ENCODE measurements at regions of chr9 and their contacts with region 1.

Region 1: GRCh38 chr9:69672596-69673310 is 582 bp upstream of the APBA1 start:
- DNase-seq: peak; percentile 10
- ATAC-seq: peak; percentile 96
- H3K4me3 ChIP-seq: peak overlapping the region; percentile 43 to 44
- H3K27ac ChIP-seq: no peak overlapping the region
- H3K4me1 ChIP-seq: no peaks in the 10 kb centered on the region
- H3K27me3 ChIP-seq: peaks cover 5% of the 10 kb centered on the region; the same call in 1 of the 2 replicates
- CTCF ChIP-seq: peak; percentile 84

Region 2: GRCh38 chr9:68832853-68833518 is 839.8 kb before region 1 on chr9:
- CTCF ChIA-PET with region 1: no interaction called
- POLR2A ChIA-PET with region 1: no interaction called
- in situ Hi-C with region 1: no loop called
- intact Hi-C with region 1: no loop called
- DNase-seq: no peak
- ATAC-seq: no peak
- H3K4me3 ChIP-seq: no peak overlapping the region
- H3K27ac ChIP-seq: no peak overlapping the region
- H3K4me1 ChIP-seq: no peaks in the 10 kb centered on the region
- H3K27me3 ChIP-seq: no peaks in the 10 kb centered on the region
- CTCF ChIP-seq: no peak

Region 3: DNA sequence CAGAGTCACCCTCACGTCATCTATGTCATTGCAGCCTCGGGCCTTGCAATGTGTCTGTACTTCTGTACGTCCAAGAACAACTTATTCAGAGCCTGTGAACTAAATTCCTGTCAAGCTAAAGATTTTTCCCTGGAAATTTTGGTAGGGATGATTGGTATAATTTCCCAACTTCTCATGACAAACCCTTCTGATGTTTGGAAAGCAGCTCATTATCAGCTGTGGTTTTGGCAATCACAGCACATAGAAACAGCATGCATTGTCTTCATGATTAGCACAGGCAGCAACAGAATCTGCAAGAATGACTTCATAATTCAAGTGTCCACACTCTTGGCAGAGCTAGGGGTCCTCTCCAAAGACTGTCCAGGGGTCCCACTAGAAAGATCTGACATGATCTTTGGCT is 50.1 kb before region 1 on chr9:
- CTCF ChIA-PET with region 1: no interaction called
- POLR2A ChIA-PET with region 1: no interaction called
- in situ Hi-C with region 1: no loop called
- intact Hi-C with region 1: no loop called
- DNase-seq: no peak
- ATAC-seq: no peak
- H3K4me3 ChIP-seq: no peak overlapping the region
- H3K27ac ChIP-seq: no peak overlapping the region
- H3K4me1 ChIP-seq: no peaks in the 10 kb centered on the region
- H3K27me3 ChIP-seq: no peaks in the 10 kb centered on the region; the same call in 1 of the 2 replicates
- CTCF ChIP-seq: no peak

Region 4: DNA sequence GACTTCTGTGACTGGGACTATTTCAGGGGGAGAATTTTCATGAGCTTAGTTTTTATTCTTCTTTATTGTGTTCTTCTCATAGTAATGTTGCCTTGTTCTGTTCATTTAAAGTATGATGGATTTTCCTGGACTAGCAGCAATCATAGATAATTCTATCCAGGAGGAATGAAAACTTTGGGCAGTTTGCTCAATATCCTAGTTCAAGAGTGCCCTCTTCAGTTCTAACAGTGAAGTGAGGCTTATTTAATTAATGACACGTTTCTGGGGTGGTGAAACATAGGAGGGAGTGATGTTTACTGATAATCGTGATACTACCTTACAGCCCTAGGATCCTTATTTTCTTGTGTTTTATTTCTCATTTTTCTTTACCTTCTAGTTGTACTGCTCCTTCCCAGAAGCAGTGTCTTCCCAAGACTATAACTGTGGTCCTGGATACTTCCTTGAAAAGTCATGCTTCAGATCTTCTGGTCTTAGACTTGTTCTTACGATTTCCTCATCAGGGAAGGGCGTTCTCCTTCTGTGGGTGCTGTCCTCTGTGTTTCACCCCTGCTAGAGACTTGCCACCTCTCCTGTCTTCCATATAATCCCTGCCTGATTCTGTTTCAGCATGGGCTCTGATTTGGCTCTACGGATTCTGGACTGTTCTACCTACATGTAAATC is 205.2 kb after region 1 on chr9:
- CTCF ChIA-PET with region 1: no interaction called
- POLR2A ChIA-PET with region 1: no interaction called
- in situ Hi-C with region 1: no loop called
- intact Hi-C with region 1: loop called (anchors 2 kb)
- DNase-seq: no peak
- ATAC-seq: no peak
- H3K4me3 ChIP-seq: no peak overlapping the region
- H3K27ac ChIP-seq: no peak overlapping the region
- H3K4me1 ChIP-seq: no peaks in the 10 kb centered on the region
- H3K27me3 ChIP-seq: no peaks in the 10 kb centered on the region
- CTCF ChIP-seq: peak; percentile 48; the same call in 1 of the 2 replicates